HCT116 (cell line): ENCODE measurements at regions of chr12 and their contacts with region 1.

Region 1: DNA sequence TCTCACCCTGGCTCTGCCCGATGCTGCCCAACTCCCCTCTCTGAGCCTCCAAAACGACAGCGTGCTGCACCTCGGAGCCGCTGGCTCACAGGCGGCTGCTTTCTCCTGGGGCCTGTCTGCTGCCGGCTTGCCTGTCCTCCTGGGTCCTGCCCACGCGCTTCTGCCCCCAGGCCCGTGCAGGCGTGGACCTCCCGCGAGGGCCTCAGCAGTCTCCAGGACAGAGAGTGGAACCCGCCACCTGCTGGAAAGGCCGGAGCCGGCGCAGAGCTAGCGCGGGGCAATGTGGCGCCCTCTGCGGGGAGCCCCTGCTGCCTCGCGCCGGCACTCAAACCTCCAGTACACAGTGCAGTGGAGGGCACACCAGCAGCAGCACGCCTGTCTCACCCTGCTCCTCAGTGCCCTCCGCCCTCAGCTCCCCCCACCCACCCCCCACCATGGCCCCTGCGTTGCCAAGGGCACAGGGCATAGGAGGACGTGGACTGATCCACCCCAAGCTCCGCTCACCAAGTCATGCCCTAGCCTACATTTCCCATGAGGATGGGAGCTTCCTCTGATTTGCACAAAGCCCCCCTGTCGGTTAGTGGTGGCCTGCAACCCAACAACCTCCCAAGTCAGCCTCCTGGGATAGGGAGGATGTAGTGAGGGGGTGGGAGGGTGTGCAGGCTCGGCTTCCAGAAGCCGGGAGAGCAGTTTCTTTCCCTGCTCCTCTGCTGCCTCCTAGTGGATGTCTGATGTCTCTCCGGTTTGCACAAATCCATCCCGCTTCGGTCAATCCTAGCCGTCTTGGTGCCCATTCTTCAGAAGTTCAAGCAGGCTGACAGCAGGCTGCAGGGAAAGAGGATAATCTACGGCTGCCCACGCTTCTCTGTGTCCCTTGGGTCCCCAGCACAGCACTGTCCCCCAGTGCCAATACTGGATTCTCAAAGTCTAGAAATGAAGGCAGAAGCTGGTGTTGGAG is 25.2 kb downstream of the KRT8 start:
- DNase-seq: peak; percentile 86
- ATAC-seq: peak; percentile 87
- H3K4me3 ChIP-seq: peak overlapping the region; percentile 30 to 49
- H3K27ac ChIP-seq: peak overlapping the region; percentile 44
- H3K4me1 ChIP-seq: peaks cover 33 to 61% of the 10 kb centered on the region in 2 experiments
- H3K27me3 ChIP-seq: no peaks in the 10 kb centered on the region
- CTCF ChIP-seq: peak in 2 of 3 experiments; percentile 76 to 95; a peak in 4 of 6 replicates
- POLR2A ChIP-seq: no peak
- RAD21 ChIP-seq: no peak

Region 2: DNA sequence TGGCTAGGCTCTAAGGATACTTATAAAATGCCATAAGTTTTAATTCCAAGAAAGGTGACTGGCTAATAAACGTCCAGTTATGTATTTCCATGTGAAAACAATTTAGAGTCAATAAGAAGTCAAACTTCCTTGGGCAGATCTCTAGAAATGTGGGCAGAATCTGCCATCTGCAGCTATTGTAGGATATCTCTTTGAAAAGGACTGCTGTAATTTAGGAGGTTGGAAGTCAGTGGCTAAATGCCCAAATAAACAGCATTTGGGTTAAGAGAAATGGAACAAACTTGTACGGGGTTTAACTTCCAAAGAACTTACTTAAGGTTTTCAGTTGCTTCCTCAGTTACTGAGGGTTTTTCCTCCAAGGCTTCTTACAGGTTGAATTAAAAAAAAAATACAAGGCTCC is 1152.7 kb before region 1 on chr12:
- CTCF ChIA-PET with region 1: no interaction called
- POLR2A ChIA-PET with region 1: no interaction called
- RAD21 ChIA-PET with region 1: no interaction called
- intact Hi-C with region 1: no loop called
- DNase-seq: no peak
- ATAC-seq: no peak
- H3K4me3 ChIP-seq: no peak overlapping the region
- H3K27ac ChIP-seq: no peak overlapping the region
- H3K4me1 ChIP-seq: no peaks in the 10 kb centered on the region
- H3K27me3 ChIP-seq: no peaks in the 10 kb centered on the region
- CTCF ChIP-seq: no peak
- POLR2A ChIP-seq: no peak
- RAD21 ChIP-seq: no peak

Region 3: GRCh38 chr12:52139552-52140062 is 740.1 kb before region 1 on chr12:
- CTCF ChIA-PET with region 1: interaction called, 140 read pairs
- POLR2A ChIA-PET with region 1: interaction called, 7 read pairs
- RAD21 ChIA-PET with region 1: interaction called, 4 to 6 read pairs
- intact Hi-C with region 1: loop called (anchors 1 kb)
- DNase-seq: no peak
- ATAC-seq: peak; percentile 73
- H3K4me3 ChIP-seq: no peak overlapping the region
- H3K27ac ChIP-seq: no peak overlapping the region
- H3K4me1 ChIP-seq: peaks cover 19 to 43% of the 10 kb centered on the region in 2 experiments
- H3K27me3 ChIP-seq: no peaks in the 10 kb centered on the region
- CTCF ChIP-seq: peak in 2 of 3 experiments; percentile 96 to 98; a peak in 4 of 6 replicates
- POLR2A ChIP-seq: no peak
- RAD21 ChIP-seq: no peak

Region 4: DNA sequence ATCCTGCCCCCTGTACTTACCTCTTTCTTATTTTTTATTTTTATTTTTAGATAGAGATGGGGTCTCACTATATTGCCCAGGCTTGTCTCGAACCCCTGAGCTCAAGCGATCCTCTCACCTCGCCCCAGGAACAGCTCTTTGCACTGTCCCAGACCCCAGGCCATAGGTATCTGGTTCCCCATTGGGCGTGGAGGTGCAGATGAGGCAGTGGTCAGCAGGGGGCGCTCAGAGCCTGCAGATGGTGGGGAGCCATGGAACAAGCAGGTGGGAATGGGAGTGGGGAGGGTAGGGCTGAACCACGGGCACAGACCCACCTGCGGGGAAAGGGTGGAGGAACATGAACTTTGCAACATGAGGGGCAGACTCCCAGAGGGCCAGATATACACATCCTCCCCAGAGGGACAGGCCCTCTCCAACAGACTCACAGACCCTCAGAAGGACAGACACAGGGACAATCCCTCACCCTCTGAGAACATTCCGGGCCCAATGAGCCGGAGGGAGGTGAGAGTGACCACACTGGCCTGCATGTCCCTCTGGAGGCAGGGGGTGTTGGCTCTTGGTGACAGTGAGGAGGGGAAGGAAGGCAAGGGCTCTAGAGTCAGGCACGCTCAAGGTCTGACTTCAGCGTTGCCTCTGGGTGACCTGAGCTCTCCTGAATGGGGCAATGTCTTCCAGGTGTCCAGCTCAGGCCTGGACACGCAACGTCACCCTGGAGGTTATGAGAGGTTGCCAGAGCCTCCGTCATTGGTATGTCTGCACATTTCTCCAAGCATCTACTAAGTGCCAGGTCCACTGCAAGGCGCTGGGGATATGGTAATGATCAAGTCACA is 722.7 kb before region 1 on chr12:
- CTCF ChIA-PET with region 1: interaction called, 23 read pairs
- POLR2A ChIA-PET with region 1: interaction called, 3 read pairs
- RAD21 ChIA-PET with region 1: interaction called, 3 to 8 read pairs
- intact Hi-C with region 1: no loop called
- DNase-seq: no peak
- ATAC-seq: peak; percentile 67
- H3K4me3 ChIP-seq: no peak overlapping the region
- H3K27ac ChIP-seq: no peak overlapping the region
- H3K4me1 ChIP-seq: peaks cover 27 to 64% of the 10 kb centered on the region in 2 experiments
- H3K27me3 ChIP-seq: no peaks in the 10 kb centered on the region
- CTCF ChIP-seq: peak in 2 of 3 experiments; percentile 95 to 98; a peak in 4 of 6 replicates
- POLR2A ChIP-seq: no peak
- RAD21 ChIP-seq: no peak

Region 5: DNA sequence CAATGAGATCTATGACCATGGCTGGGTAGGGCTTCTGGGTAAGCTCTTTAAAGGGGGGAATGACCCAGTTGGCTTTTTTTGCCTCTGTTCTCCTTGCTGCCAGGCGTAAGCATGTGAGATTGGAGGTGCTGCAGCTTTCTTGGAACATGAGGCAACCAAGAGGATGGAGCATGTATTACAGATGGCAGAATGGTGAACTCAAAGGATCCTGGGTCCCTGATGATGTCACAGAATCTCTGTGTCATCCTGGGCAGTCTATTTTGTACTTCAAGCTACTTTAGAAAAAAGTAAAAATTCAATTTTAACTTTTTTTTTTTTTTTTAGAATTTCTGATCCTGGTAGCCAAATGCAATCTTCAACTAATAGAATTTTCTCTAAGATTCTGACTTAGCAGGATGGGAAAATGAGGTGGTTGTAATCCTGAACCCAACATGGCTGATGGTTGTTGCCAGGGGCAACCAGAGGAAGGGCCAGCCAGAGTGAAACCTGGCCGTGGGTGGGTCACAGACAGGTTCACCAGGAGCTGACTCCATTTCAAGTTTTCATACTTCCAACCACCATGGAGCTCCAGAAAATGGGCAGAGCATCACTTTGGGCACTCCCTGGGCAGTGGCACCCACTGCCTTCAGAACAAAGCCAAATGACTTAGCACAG is 481.4 kb before region 1 on chr12:
- CTCF ChIA-PET with region 1: interaction called, 73 read pairs
- POLR2A ChIA-PET with region 1: interaction called, 4 read pairs
- RAD21 ChIA-PET with region 1: interaction called in 1 of 2 experiments, 7 read pairs
- intact Hi-C with region 1: no loop called
- DNase-seq: no peak
- ATAC-seq: no peak
- H3K4me3 ChIP-seq: no peak overlapping the region
- H3K27ac ChIP-seq: no peak overlapping the region
- H3K4me1 ChIP-seq: peaks cover 0 to 5% of the 10 kb centered on the region in 2 experiments; a peak in 1 of 4 replicates
- H3K27me3 ChIP-seq: no peaks in the 10 kb centered on the region
- CTCF ChIP-seq: peak in 1 of 3 experiments; percentile 10; a peak in 1 of 6 replicates
- POLR2A ChIP-seq: no peak
- RAD21 ChIP-seq: no peak

Region 6: DNA sequence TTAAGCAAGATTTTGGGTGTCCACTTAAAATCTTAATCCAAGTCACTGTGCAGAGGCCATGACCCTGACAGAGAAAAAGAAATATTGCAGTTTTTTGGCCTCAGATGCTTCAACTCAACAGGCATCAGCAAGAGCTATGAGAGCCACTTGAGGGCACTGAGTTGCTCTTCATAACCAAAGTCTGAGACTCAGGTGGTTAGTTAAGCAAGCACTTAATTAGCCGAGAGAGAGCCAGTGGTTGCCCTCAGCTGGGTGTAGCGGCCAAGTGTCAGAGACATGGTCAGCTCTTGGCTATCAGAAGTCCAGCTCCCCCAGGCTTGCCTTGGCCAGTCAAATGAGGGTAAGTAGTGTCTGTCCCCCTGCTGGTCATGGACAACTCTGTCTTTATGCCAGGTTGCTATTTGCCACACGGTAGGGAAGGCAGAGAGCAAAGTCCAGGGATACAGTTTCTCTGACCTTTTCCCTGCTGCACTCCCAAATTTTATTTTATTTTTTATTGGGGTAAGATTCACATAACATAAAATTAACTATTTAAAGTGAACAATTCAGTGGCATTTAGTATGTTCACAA is 317.7 kb before region 1 on chr12:
- CTCF ChIA-PET with region 1: interaction called, 12 read pairs
- POLR2A ChIA-PET with region 1: no interaction called
- RAD21 ChIA-PET with region 1: interaction called in 1 of 2 experiments, 6 read pairs
- intact Hi-C with region 1: no loop called
- DNase-seq: peak; percentile 22
- ATAC-seq: peak; percentile 84
- H3K4me3 ChIP-seq: no peak overlapping the region
- H3K27ac ChIP-seq: no peak overlapping the region
- H3K4me1 ChIP-seq: no peaks in the 10 kb centered on the region
- H3K27me3 ChIP-seq: no peaks in the 10 kb centered on the region
- CTCF ChIP-seq: peak; percentile 59 to 66 (median 60); a peak in 5 of 6 replicates
- POLR2A ChIP-seq: no peak
- RAD21 ChIP-seq: peak; percentile 54

Region 7: GRCh38 chr12:52582971-52583456 is 296.7 kb before region 1 on chr12:
- CTCF ChIA-PET with region 1: interaction called, 17 read pairs
- POLR2A ChIA-PET with region 1: no interaction called
- RAD21 ChIA-PET with region 1: interaction called, 5 to 7 read pairs
- intact Hi-C with region 1: loop called (anchors 1 kb)
- DNase-seq: peak; percentile 36
- ATAC-seq: peak; percentile 96
- H3K4me3 ChIP-seq: no peak overlapping the region
- H3K27ac ChIP-seq: no peak overlapping the region
- H3K4me1 ChIP-seq: peaks cover 0 to 40% of the 10 kb centered on the region in 2 experiments; a peak in 3 of 4 replicates
- H3K27me3 ChIP-seq: no peaks in the 10 kb centered on the region
- CTCF ChIP-seq: peak; percentile 73 to 95 (median 79)
- POLR2A ChIP-seq: no peak
- RAD21 ChIP-seq: peak; percentile 93

Region 8: GRCh38 chr12:52787324-52788191 is 92.1 kb before region 1 on chr12:
- CTCF ChIA-PET with region 1: no interaction called
- POLR2A ChIA-PET with region 1: no interaction called
- RAD21 ChIA-PET with region 1: no interaction called
- intact Hi-C with region 1: no loop called
- DNase-seq: no peak
- ATAC-seq: no peak
- H3K4me3 ChIP-seq: no peak overlapping the region
- H3K27ac ChIP-seq: no peak overlapping the region
- H3K4me1 ChIP-seq: no peaks in the 10 kb centered on the region
- H3K27me3 ChIP-seq: peaks cover 5% of the 10 kb centered on the region
- CTCF ChIP-seq: no peak
- POLR2A ChIP-seq: no peak
- RAD21 ChIP-seq: no peak